HCT116 (cell line): ENCODE measurements at regions of chr17 and their contacts with region 1.

Region 1: DNA sequence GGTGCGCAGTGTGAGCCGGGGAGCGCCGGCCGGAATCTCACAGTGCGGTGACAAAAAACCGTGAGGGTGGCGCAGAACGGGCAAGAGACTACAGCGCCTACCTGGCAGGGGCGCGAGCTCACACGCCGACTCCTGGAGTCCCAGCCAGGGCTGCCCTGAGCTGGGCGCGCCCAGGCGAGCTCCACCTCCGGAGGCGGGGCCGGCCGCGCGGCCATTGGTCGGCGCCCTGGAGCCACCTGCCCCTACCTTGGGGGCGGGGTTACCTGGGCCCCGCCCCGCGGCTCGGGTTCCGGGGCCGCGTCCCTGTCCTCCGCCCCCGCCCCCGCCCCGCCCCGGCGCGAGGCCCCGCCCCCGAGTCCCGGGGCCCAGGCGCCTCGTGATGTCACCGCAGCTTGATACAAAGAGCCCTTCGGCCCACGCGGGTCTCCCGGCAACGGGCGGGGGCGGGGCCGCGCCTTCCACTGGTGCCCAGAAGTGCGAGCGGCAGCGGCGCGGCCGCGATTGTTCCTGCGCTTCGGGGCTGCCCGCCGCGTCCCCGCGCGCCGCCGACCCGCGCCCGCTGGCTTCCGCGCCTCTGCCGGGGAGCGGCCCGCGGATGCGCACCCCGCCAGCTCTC is 96.3 kb downstream of the RAB11FIP4 start:
- DNase-seq: peak; percentile 87
- ATAC-seq: peak; percentile 94
- H3K4me3 ChIP-seq: peak overlapping the region; percentile 66 to 85
- H3K27ac ChIP-seq: peak overlapping the region; percentile 64
- H3K4me1 ChIP-seq: peaks cover 23 to 34% of the 10 kb centered on the region in 2 experiments
- H3K27me3 ChIP-seq: no peaks in the 10 kb centered on the region
- CTCF ChIP-seq: 0 out of 6 replicates have a peak, but pooled peaks of 1 of the 3 experiments have one; percentile 7
- POLR2A ChIP-seq: peak; percentile 74
- RAD21 ChIP-seq: no peak

Region 2: GRCh38 chr17:31499771-31500554 is 12.2 kb after region 1 on chr17:
- CTCF ChIA-PET with region 1: interaction called, 3 read pairs
- POLR2A ChIA-PET with region 1: interaction called, 11 read pairs
- RAD21 ChIA-PET with region 1: no interaction called
- intact Hi-C with region 1: no loop called
- DNase-seq: peak; percentile 42
- ATAC-seq: peak; percentile 92
- H3K4me3 ChIP-seq: peak overlapping the region in 1 of 2 experiments; percentile 46; a peak in 2 of 4 replicates
- H3K27ac ChIP-seq: peak overlapping the region; percentile 13; the same call in 1 of the 2 replicates
- H3K4me1 ChIP-seq: peaks cover 26 to 42% of the 10 kb centered on the region in 2 experiments
- H3K27me3 ChIP-seq: no peaks in the 10 kb centered on the region
- CTCF ChIP-seq: no peak
- POLR2A ChIP-seq: no peak
- RAD21 ChIP-seq: 0 out of 2 replicates have a peak, but pooled peaks have one; percentile 1